ENCODE measurements at regions of chr1 and their contacts with region 1.

Region 1: GRCh38 chr1:3410142-3410925 is 44.1 kb upstream of the ARHGEF16 start:
- DNase-seq: peak in 1 of 2 experiments; percentile 49
- H3K4me3 ChIP-seq: no peak overlapping the region
- H3K27ac ChIP-seq: no peak overlapping the region
- H3K4me1 ChIP-seq: no peaks in the 10 kb centered on the region
- H3K27me3 ChIP-seq: peaks cover 80% of the 10 kb centered on the region
- CTCF ChIP-seq: peak; percentile 60

Region 2: DNA sequence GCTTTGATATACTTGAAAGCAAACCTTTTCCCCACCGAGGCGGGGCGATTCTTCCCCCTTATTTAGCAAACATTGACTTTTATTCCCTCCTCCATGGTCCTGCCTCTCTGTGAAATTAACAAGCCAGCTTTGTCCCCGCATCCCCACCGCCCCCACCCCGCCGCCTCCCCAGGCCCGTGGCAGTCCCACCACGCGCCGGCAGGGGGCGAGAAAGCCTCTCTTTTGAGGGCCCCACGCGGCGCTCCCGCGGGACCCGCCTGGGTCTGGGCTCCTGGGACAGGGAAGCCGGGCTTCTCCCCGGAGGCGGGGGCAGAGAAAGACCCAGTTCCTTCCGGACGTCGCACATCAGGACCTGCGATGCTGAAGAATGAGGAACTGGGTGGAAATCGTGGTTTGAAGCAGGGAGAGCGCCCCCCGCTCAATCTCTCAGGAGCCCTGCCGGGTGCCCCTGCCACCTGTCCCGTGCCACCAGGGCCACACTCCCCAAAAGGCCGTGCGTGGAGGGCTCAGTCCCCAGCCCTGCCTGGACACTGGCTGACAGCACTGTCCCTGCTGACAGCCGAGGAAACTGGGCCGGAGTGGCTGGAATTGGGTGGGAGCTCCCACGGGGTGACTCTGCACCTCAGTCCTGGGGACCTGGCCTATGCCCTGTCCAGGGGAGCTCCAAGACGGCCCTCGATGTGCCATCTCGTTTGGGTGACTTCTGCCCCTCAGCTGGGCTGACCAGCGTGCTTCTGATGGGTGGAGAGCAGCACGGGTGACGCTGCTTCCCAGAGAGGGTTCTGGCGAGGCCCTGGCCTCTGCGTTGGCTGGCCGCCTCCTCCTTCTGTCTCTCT is 397.7 kb before region 1 on chr1:
- CTCF ChIA-PET with region 1: no interaction called
- POLR2A ChIA-PET with region 1: no interaction called
- intact Hi-C with region 1: loop called (anchors 5 kb)
- DNase-seq: peak in 1 of 2 experiments; percentile 15
- H3K4me3 ChIP-seq: no peak overlapping the region
- H3K27ac ChIP-seq: no peak overlapping the region
- H3K4me1 ChIP-seq: no peaks in the 10 kb centered on the region
- H3K27me3 ChIP-seq: peaks cover 68% of the 10 kb centered on the region
- CTCF ChIP-seq: peak; percentile 63

Measured in PC-9 (cell line).